ENCODE measurements at regions of chr2 and their contacts with region 1.

Region 1: GRCh38 chr2:121197369-121198091 is 87.5 kb downstream of the TFCP2L1 start:
- DNase-seq: peak; percentile 97 to 99
- ATAC-seq: peak; percentile 92 to 93
- H3K4me3 ChIP-seq: no peak overlapping the region
- H3K27ac ChIP-seq: peak overlapping the region; percentile 90 to 96 (median 94)
- H3K4me1 ChIP-seq: peaks cover 22 to 32% of the 10 kb centered on the region in 2 donors
- H3K27me3 ChIP-seq: no peaks in the 10 kb centered on the region
- CTCF ChIP-seq: no peak
- POLR2A ChIP-seq: peak in 1 of 2 donors; percentile 43

Region 2: GRCh38 chr2:120539937-120540718 is 657.4 kb before region 1 on chr2:
- in situ Hi-C with region 1: no loop called
- intact Hi-C with region 1: loop called (anchors 1 kb)
- DNase-seq: peak; percentile 96 to 98
- ATAC-seq: peak; percentile 73 to 78
- H3K4me3 ChIP-seq: peak overlapping the region in 1 of 4 donors; percentile 36
- H3K27ac ChIP-seq: peak overlapping the region; percentile 96 to 100 (median 98)
- H3K4me1 ChIP-seq: peaks cover 48 to 49% of the 10 kb centered on the region in 2 donors
- H3K27me3 ChIP-seq: no peaks in the 10 kb centered on the region
- CTCF ChIP-seq: no peak
- POLR2A ChIP-seq: peak; percentile 65 to 86

Region 3: DNA sequence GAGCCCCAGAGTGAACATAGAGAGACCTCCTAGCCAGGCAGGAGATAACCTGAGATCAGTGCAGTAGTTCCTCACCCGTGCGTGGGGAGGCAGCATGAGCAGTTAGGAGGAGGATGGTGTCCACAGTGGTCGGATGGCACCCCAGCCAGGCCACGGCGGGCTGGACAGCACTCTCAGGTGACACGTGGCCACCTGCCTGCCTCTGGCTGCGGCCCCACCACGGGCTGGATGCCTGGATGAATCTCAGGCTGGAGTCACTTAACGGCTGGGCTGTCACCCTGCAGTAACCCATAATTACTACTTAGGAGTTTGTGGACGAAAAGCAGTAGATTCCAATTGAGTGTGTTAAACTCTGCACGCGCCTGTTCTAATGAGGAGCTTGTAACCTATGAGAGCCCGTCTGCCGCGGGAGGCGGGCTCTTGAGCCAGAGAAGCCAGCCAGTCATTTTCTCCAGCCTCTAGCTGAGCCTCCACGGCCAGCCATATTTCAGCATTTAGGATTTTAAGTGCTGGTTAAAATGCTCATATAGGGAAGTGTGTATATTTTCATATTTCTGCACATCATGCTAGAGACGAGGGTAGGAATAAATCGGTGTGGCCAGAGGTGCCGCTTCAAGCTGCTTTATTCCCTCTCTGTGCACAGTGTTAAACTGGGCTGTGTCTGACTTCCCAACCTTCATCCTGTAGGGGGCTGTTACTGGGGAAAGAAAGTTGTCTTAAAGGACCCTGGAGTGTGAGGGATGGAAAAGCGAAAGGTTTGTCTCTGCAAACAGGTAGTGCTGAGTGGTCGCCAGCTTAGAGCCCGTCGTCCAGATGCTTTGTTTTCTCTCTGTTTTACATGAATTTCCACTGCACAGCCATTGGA is 317.9 kb before region 1 on chr2:
- in situ Hi-C with region 1: no loop called
- intact Hi-C with region 1: loop called (anchors 10 kb)
- DNase-seq: peak in 1 of 2 donors; percentile 61
- ATAC-seq: peak; percentile 53 to 66
- H3K4me3 ChIP-seq: peak overlapping the region in 1 of 4 donors; percentile 9
- H3K27ac ChIP-seq: peak overlapping the region in 3 of 4 donors; percentile 5 to 65 (median 20)
- H3K4me1 ChIP-seq: peaks cover 33 to 37% of the 10 kb centered on the region in 2 donors
- H3K27me3 ChIP-seq: no peaks in the 10 kb centered on the region
- CTCF ChIP-seq: peak in 3 of 5 experiments; percentile 28 to 53 (median 41)
- POLR2A ChIP-seq: no peak

Region 4: GRCh38 chr2:121185571-121186074 is 11.9 kb before region 1 on chr2:
- in situ Hi-C with region 1: no loop called
- intact Hi-C with region 1: loop called (anchors 1 kb)
- DNase-seq: peak; percentile 70 to 74
- ATAC-seq: peak; percentile 76 to 81
- H3K4me3 ChIP-seq: no peak overlapping the region
- H3K27ac ChIP-seq: peak overlapping the region; percentile 62 to 85 (median 72)
- H3K4me1 ChIP-seq: peaks cover 5 to 23% of the 10 kb centered on the region in 2 donors
- H3K27me3 ChIP-seq: no peaks in the 10 kb centered on the region
- CTCF ChIP-seq: no peak
- POLR2A ChIP-seq: no peak

Region 5: DNA sequence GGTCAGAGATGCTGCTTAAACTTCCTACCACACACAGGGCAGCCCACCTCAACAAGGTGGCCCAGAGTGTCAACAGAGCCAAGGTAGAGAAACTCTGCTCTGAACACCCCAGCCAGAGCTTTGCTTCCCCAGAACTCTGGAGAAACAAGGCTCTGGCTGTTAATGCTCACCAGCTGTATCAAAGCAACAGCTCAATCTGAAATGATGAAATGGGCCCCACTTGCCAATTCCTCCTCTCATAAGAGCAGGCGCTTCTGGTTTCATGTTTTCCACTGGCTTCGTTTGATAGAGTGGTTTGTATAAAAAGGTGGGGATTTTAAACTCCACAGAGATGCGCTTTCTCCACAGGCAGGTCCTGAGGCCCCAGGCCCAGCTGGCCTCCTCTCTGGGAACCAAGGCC is 148.4 kb after region 1 on chr2:
- in situ Hi-C with region 1: no loop called
- intact Hi-C with region 1: loop called (anchors 5 kb)
- DNase-seq: peak; percentile 49 to 66
- ATAC-seq: peak; percentile 74 to 84
- H3K4me3 ChIP-seq: no peak overlapping the region
- H3K27ac ChIP-seq: peak overlapping the region; percentile 74 to 80 (median 78)
- H3K4me1 ChIP-seq: peaks cover 9 to 28% of the 10 kb centered on the region in 2 donors
- H3K27me3 ChIP-seq: no peaks in the 10 kb centered on the region
- CTCF ChIP-seq: no peak
- POLR2A ChIP-seq: no peak

Region 6: DNA sequence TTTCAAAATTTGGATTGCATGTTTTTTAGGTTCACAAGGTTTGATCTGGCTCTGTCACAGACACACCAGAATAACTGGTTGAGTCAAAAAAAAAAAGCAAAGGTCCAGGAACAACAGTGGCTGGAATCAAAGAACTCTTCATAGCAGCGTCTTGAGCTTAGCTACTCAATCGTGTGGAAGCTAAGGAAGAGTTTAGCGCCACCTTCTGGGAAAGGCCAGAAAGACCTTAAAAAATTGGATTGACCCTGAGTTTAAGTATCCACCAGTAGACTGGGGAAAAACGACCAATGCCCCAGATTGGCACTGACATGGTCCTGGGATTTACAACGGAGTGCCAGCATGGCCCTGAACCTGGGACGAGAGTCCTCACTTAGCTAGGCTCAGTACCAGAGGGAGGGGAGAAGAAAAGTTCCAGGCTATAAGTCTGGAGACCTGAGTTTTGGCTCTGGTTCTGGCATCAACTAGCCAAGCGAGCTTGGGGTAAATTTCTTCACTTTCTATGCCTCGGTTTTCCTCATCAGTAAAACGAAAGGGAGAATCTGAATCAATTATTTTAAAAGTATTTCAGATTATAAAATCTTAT is 158.6 kb after region 1 on chr2:
- in situ Hi-C with region 1: no loop called
- intact Hi-C with region 1: loop called (anchors 5 kb)
- DNase-seq: no peak
- ATAC-seq: peak; percentile 35 to 62
- H3K4me3 ChIP-seq: no peak overlapping the region
- H3K27ac ChIP-seq: peak overlapping the region; percentile 14 to 55 (median 50)
- H3K4me1 ChIP-seq: peaks cover 26 to 34% of the 10 kb centered on the region in 2 donors
- H3K27me3 ChIP-seq: no peaks in the 10 kb centered on the region
- CTCF ChIP-seq: peak; percentile 41 to 75 (median 61)
- POLR2A ChIP-seq: no peak

Measured in gastrocnemius medialis (tissue), 4 donors.